ENCODE measurements at regions of chr17 and their contacts with region 1.

Region 1: DNA sequence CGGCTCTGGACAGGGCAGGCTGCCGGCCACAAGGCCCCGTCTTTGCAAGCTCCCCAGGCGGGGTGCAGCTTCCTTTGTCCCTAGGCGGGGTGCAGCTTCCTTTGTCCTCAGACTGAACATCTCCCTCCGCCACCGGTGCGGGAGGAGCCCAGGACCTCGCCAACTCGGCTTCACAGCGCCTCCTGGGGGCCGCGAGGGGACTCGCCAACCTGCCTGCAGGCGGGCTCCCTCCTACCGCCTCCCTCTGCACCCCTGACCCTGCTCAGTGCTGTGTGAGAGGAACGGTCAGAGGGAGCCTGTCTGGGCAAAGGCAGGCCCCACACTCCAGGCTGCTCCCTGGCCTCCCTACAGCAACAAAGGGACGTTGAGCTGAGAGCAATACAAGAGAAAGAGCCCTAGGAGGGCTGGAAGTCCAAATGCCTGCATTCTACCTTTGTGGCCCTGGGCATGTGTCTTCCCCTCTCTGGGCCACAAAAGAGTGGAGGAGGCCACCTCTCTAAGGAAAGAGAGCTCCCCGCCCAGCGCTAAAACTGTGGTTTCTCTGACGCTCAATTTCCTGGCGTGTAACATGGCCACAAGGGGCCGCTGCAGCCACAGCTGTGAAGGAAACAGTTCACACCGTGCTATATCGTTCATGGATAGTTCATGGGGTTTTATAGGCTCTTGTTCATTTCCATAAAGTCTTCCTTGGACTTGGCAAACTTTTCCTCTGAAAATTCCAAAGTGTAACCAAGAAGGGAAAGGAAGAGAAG is 20.9 kb upstream of the KRT19 start:
- DNase-seq: peak; percentile 82 to 88 (median 84)
- H3K4me3 ChIP-seq: peak overlapping the region in 1 of 2 donors; percentile 29
- H3K4me3 Mint-ChIP-seq: peak overlapping the region; percentile 27 to 78 (median 64)
- H3K27ac ChIP-seq: peak overlapping the region; percentile 30
- H3K27ac Mint-ChIP-seq: peak overlapping the region; percentile 68 to 84 (median 80)
- H3K4me1 ChIP-seq: peaks cover 17% of the 10 kb centered on the region
- H3K4me1 Mint-ChIP-seq: peaks cover 5 to 20% (median 15%) of the 10 kb centered on the region in 4 donors
- H3K27me3 ChIP-seq: no peaks in the 10 kb centered on the region
- H3K27me3 Mint-ChIP-seq: peaks cover 10 to 11% of the 10 kb centered on the region in 2 donors

Region 2: GRCh38 chr17:40854159-40854814 is 694.7 kb before region 1 on chr17:
- CTCF ChIA-PET with region 1: interaction called, 35 read pairs
- POLR2A ChIA-PET with region 1: no interaction called
- intact Hi-C with region 1: loop called (anchors 1 kb)
- DNase-seq: no peak
- H3K4me3 ChIP-seq: no peak overlapping the region
- H3K4me3 Mint-ChIP-seq: no peak overlapping the region
- H3K27ac ChIP-seq: no peak overlapping the region
- H3K27ac Mint-ChIP-seq: no peak overlapping the region
- H3K4me1 ChIP-seq: no peaks in the 10 kb centered on the region
- H3K4me1 Mint-ChIP-seq: peaks cover 0 to 4% (median 2%) of the 10 kb centered on the region in 4 donors
- H3K27me3 ChIP-seq: no peaks in the 10 kb centered on the region
- H3K27me3 Mint-ChIP-seq: peaks cover 8 to 10% of the 10 kb centered on the region in 2 donors

Region 3: DNA sequence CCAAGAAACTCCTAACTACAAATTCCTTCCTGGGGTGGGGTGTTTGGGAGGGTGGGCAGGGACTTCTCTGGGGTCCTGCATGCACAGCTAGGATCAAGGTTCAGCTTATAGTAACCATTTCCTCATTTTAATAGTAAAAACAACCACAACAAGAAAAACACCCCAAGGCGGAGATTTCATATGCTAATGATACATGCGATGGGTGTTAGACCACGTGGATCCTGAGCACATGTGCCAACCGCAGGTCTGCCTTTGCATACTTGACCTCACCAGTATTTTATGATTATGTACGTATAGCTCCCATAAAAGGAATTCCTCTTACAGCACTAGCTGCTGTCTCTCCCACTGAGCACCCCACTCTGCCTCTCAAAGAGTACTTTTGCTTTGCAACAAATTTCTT is 432.7 kb before region 1 on chr17:
- CTCF ChIA-PET with region 1: interaction called, 11 read pairs
- POLR2A ChIA-PET with region 1: no interaction called
- intact Hi-C with region 1: loop called (anchors 2 kb)
- DNase-seq: no peak
- H3K4me3 ChIP-seq: no peak overlapping the region
- H3K4me3 Mint-ChIP-seq: no peak overlapping the region
- H3K27ac ChIP-seq: no peak overlapping the region
- H3K27ac Mint-ChIP-seq: peak overlapping the region in 1 of 7 donors; percentile 79
- H3K4me1 ChIP-seq: peaks cover 15% of the 10 kb centered on the region
- H3K4me1 Mint-ChIP-seq: peaks cover 2 to 29% (median 16%) of the 10 kb centered on the region in 4 donors
- H3K27me3 ChIP-seq: no peaks in the 10 kb centered on the region
- H3K27me3 Mint-ChIP-seq: peaks cover 4% of the 10 kb centered on the region in 2 donors

Region 4: DNA sequence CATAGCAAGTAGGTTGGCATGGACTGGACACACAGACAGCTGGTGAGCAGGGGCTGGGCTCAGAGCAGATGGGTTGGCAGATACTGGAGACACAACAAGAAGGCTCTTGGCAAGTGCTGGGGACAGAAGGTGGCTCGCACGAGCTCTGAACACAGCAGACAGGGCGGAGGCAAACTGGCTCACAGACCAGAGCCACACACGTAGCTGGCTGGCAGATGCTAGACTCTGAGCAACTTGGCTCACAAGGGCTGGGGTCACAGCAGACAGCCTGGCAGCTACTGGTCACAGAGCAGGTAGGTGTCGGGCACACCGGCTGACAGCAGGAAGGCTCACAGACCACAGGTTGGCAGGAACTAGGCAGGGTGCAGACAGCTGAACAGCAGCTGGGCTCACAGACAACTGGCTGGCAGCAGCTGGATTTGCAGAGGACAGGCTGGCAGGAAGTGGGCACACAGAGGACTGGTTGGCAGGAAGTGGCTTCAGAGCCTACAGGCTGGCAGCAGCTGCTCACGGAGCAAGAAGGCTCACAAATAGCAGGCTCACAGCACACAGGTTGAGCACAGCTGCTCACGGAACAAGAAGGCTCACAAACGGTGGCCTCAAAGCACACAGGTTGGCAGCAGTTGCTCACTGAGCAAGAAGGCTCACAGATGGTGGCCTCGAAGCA is 240.6 kb before region 1 on chr17:
- CTCF ChIA-PET with region 1: interaction called, 11 read pairs
- POLR2A ChIA-PET with region 1: interaction called, 8 read pairs
- intact Hi-C with region 1: no loop called
- DNase-seq: peak; percentile 88 to 95 (median 92)
- H3K4me3 ChIP-seq: peak overlapping the region in 1 of 2 donors; percentile 41
- H3K4me3 Mint-ChIP-seq: peak overlapping the region; percentile 65 to 82 (median 78)
- H3K27ac ChIP-seq: peak overlapping the region; percentile 62
- H3K27ac Mint-ChIP-seq: peak overlapping the region; percentile 96 to 98 (median 97)
- H3K4me1 ChIP-seq: peaks cover 59% of the 10 kb centered on the region
- H3K4me1 Mint-ChIP-seq: peaks cover 54 to 63% (median 58%) of the 10 kb centered on the region in 4 donors
- H3K27me3 ChIP-seq: no peaks in the 10 kb centered on the region
- H3K27me3 Mint-ChIP-seq: no peaks in the 10 kb centered on the region

Region 5: DNA sequence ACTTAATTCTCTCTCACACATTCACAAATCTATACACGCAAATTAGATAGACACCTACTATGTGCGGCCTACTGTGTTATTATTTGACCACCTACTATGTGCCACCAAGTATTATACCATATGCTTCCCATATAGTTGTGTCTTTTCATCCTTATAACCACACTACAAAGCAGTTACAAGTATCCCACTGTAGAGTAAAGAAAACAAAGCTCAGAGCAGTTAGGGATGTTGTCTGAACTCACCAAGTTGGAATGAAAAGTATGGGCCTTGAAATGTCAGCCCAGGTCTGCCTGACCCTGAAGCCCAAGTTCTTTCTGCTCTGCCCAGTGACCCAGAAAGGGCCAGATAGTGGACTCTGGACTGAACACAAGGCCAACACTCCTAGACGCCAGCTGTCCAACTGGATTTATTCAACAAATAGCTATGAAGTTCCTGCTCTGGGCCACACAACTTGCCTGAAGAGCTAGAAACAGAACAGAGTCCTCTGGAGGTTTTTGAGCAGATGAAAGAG is 133.1 kb before region 1 on chr17:
- CTCF ChIA-PET with region 1: no interaction called
- POLR2A ChIA-PET with region 1: no interaction called
- intact Hi-C with region 1: no loop called
- DNase-seq: no peak
- H3K4me3 ChIP-seq: no peak overlapping the region
- H3K4me3 Mint-ChIP-seq: no peak overlapping the region
- H3K27ac ChIP-seq: no peak overlapping the region
- H3K27ac Mint-ChIP-seq: no peak overlapping the region
- H3K4me1 ChIP-seq: peaks cover 6% of the 10 kb centered on the region
- H3K4me1 Mint-ChIP-seq: peaks cover 10 to 19% (median 13%) of the 10 kb centered on the region in 4 donors
- H3K27me3 ChIP-seq: no peaks in the 10 kb centered on the region
- H3K27me3 Mint-ChIP-seq: peaks cover 0 to 2% of the 10 kb centered on the region in 2 donors

Region 6: DNA sequence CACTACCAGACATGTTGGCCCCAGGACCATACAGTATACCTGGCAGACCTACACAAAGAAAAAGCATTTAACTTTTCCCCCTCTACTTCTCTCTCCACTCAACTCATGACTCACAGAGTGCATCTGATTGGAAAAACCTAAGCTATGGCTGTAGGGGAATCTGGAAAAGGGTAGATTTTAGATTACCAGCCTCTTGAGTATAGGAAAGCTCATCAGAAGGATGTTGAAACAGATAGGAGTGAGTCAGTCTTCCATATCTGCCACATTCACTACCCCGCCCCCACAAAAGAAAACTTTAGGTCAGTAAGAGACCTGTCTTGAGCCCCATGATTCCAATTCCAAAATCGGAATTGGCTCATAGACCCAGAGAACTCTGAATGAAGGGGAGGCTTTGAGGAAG is 10.5 kb after region 1 on chr17:
- CTCF ChIA-PET with region 1: interaction called, 42 read pairs
- POLR2A ChIA-PET with region 1: no interaction called
- intact Hi-C with region 1: no loop called
- DNase-seq: no peak
- H3K4me3 ChIP-seq: no peak overlapping the region
- H3K4me3 Mint-ChIP-seq: no peak overlapping the region
- H3K27ac ChIP-seq: no peak overlapping the region
- H3K27ac Mint-ChIP-seq: peak overlapping the region in 1 of 7 donors; percentile 13
- H3K4me1 ChIP-seq: no peaks in the 10 kb centered on the region
- H3K4me1 Mint-ChIP-seq: no peaks in the 10 kb centered on the region
- H3K27me3 ChIP-seq: peaks cover 7% of the 10 kb centered on the region
- H3K27me3 Mint-ChIP-seq: peaks cover 29 to 34% of the 10 kb centered on the region in 2 donors

Region 7: DNA sequence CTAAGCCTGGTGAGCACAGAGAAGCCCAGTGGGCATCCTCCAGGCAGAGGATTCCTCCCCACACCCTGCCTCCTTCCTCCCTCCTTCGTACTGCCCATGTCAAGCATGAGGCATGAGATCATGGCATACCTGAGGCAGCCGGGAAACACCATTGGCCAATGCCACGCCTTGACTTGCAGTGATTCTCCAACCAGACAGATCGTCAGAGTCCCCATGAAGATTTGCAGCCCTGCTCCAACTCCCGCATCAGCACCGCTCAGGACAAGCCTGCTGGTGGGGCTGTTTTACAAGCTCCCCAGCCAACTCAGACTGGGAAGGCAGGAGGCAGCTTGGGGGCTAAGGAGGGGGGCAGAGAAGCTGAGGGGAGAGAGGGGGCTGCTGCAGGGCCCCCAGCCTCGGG is 66.4 kb after region 1 on chr17:
- CTCF ChIA-PET with region 1: no interaction called
- POLR2A ChIA-PET with region 1: no interaction called
- intact Hi-C with region 1: no loop called
- DNase-seq: no peak
- H3K4me3 ChIP-seq: no peak overlapping the region
- H3K4me3 Mint-ChIP-seq: no peak overlapping the region
- H3K27ac ChIP-seq: no peak overlapping the region
- H3K27ac Mint-ChIP-seq: no peak overlapping the region
- H3K4me1 ChIP-seq: no peaks in the 10 kb centered on the region
- H3K4me1 Mint-ChIP-seq: no peaks in the 10 kb centered on the region
- H3K27me3 ChIP-seq: no peaks in the 10 kb centered on the region
- H3K27me3 Mint-ChIP-seq: peaks cover 3 to 15% of the 10 kb centered on the region in 2 donors

Region 8: DNA sequence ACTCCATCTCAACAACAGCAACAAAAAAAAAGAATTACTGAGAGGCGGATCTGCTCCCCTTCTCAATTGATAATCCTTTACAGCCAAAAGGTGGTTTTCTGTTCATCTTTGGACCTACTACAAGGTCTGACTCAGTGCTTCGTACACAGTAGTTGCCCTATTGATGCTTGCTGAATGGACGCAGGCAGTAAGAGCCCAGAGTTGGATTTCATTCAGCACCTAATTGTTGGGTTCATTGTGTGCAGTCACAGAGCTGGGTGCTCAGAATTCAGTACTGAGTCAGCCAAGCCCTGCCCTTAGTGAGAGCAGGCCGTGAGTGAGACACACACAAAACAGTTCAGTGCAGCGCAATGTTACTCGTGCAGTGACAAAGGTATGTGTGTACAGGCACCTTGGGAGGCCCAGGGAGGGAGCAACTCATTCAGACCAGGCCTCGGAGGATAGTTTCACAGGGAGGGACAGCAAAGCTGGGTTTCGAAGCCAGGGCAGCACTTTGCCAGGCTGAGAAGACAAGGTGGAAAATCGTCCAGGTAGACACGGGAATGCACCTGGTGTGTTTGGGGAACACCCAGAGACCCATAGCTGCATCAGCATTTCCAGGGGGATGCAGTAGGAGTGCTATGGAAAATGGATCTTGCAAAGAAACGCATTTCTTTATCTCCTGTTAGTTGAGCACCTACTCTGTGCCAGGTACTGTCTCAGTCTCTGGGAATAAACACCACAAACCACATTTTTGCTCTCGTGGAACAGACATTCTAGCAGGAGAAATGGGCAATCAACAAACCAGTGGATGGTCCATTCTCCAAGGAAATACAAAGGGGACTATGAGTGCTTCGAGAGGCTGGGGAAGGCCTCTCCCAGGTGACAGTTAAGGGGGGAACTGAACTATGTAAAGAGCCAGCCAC is 93.5 kb after region 1 on chr17:
- CTCF ChIA-PET with region 1: interaction called, 74 read pairs
- POLR2A ChIA-PET with region 1: interaction called, 12 read pairs
- intact Hi-C with region 1: no loop called
- DNase-seq: no peak
- H3K4me3 ChIP-seq: no peak overlapping the region
- H3K4me3 Mint-ChIP-seq: no peak overlapping the region
- H3K27ac ChIP-seq: no peak overlapping the region
- H3K27ac Mint-ChIP-seq: peak overlapping the region in 2 of 7 donors; percentile 1 to 42
- H3K4me1 ChIP-seq: no peaks in the 10 kb centered on the region
- H3K4me1 Mint-ChIP-seq: no peaks in the 10 kb centered on the region
- H3K27me3 ChIP-seq: no peaks in the 10 kb centered on the region
- H3K27me3 Mint-ChIP-seq: no peaks in the 10 kb centered on the region

Region 9: GRCh38 chr17:41665566-41666236 is 116.7 kb after region 1 on chr17:
- CTCF ChIA-PET with region 1: interaction called, 130 read pairs
- POLR2A ChIA-PET with region 1: interaction called, 18 read pairs
- intact Hi-C with region 1: loop called (anchors 1 kb)
- DNase-seq: peak; percentile 84 to 92 (median 88)
- H3K4me3 ChIP-seq: peak overlapping the region; percentile 69 to 71
- H3K4me3 Mint-ChIP-seq: peak overlapping the region; percentile 82 to 97 (median 92)
- H3K27ac ChIP-seq: peak overlapping the region; percentile 96
- H3K27ac Mint-ChIP-seq: peak overlapping the region; percentile 94 to 100 (median 98)
- H3K4me1 ChIP-seq: peaks cover 22% of the 10 kb centered on the region
- H3K4me1 Mint-ChIP-seq: peaks cover 13 to 35% (median 21%) of the 10 kb centered on the region in 4 donors
- H3K27me3 ChIP-seq: no peaks in the 10 kb centered on the region
- H3K27me3 Mint-ChIP-seq: peaks cover 0 to under 1% of the 10 kb centered on the region in 2 donors

Measured in CD4-positive, alpha-beta memory T cell (primary cell).